ENCODE measurements at regions of chr19 and their contacts with region 1.

Region 1: GRCh38 chr19:39125554-39126311 is at the start of gene PAK4:
- DNase-seq: peak; percentile 97
- H3K4me3 ChIP-seq: peak within 1 kb of the TSS; percentile 71 to 97 (median 85)
- H3K27ac ChIP-seq: peak within 1 kb of the TSS; percentile 39
- H3K4me1 ChIP-seq: peaks cover 18% of the 10 kb centered on the region
- H3K27me3 ChIP-seq: no peaks in the 10 kb centered on the region
- CTCF ChIP-seq: no peak
- POLR2A ChIP-seq: peak; percentile 71
- total RNA-seq, gene PAK4: 49.6 and 55.4 TPM in 2 replicates

Region 2: DNA sequence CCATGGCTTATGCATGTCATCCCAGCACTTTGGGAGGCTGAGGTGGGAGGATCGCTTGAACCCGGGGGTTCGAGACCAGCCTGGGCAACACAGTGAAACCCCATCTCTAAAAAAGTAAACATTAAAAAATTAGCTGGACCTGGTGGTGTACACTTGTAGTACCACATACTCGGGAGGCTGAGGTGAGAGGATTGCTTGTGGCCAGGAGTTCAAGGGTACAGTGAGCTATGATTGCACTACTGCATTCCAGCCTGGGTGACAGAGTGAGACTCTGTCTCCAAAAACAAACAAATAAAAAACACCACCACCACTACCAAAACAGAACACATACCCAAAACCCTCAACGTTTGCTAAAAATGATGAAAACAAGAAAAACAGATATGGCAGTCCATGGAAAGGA is 166.1 kb before region 1 on chr19:
- CTCF ChIA-PET with region 1: interaction called, 10 read pairs
- POLR2A ChIA-PET with region 1: no interaction called
- dilution Hi-C with region 1: no loop called
- intact Hi-C with region 1: no loop called
- DNase-seq: no peak
- H3K4me3 ChIP-seq: no peak overlapping the region
- H3K27ac ChIP-seq: no peak overlapping the region
- H3K4me1 ChIP-seq: peaks cover 2% of the 10 kb centered on the region
- H3K27me3 ChIP-seq: no peaks in the 10 kb centered on the region
- CTCF ChIP-seq: no peak
- POLR2A ChIP-seq: no peak

Region 3: DNA sequence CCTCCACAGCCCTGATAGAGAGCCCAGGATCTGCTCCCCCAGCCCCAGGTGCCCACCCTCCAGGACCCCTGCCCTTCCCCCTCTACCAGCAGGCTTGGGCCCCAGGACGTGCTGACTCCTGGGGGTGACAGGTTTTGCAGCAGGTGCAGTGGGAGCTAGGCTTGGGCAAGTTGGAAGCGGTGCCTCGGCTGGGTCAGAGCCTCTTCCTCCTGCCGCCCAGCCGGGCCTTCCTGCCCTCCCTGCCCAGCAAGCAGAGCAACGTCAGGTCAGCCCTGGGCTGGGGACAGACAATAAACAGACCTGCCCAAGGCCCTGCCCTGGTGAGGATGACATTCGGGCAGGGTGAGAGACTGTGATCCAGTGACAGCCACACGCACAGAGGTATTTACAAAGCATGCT is 61.8 kb after region 1 on chr19:
- CTCF ChIA-PET with region 1: interaction called, 13 read pairs
- POLR2A ChIA-PET with region 1: no interaction called
- dilution Hi-C with region 1: no loop called
- intact Hi-C with region 1: loop called (anchors 1 kb)
- DNase-seq: no peak
- H3K4me3 ChIP-seq: no peak overlapping the region
- H3K27ac ChIP-seq: no peak overlapping the region
- H3K4me1 ChIP-seq: peaks cover 5% of the 10 kb centered on the region
- H3K27me3 ChIP-seq: peaks cover 4 to 7% of the 10 kb centered on the region in 2 experiments
- CTCF ChIP-seq: no peak
- POLR2A ChIP-seq: no peak

Region 4: GRCh38 chr19:39328046-39328705 is 202.4 kb after region 1 on chr19:
- CTCF ChIA-PET with region 1: interaction called, 124 read pairs
- POLR2A ChIA-PET with region 1: no interaction called
- dilution Hi-C with region 1: no loop called
- intact Hi-C with region 1: loop called (anchors 1 kb)
- DNase-seq: peak; percentile 62
- H3K4me3 ChIP-seq: no peak overlapping the region
- H3K27ac ChIP-seq: no peak overlapping the region
- H3K4me1 ChIP-seq: no peaks in the 10 kb centered on the region
- H3K27me3 ChIP-seq: no peaks in the 10 kb centered on the region
- CTCF ChIP-seq: peak; percentile 95 to 97
- POLR2A ChIP-seq: no peak

Region 5: DNA sequence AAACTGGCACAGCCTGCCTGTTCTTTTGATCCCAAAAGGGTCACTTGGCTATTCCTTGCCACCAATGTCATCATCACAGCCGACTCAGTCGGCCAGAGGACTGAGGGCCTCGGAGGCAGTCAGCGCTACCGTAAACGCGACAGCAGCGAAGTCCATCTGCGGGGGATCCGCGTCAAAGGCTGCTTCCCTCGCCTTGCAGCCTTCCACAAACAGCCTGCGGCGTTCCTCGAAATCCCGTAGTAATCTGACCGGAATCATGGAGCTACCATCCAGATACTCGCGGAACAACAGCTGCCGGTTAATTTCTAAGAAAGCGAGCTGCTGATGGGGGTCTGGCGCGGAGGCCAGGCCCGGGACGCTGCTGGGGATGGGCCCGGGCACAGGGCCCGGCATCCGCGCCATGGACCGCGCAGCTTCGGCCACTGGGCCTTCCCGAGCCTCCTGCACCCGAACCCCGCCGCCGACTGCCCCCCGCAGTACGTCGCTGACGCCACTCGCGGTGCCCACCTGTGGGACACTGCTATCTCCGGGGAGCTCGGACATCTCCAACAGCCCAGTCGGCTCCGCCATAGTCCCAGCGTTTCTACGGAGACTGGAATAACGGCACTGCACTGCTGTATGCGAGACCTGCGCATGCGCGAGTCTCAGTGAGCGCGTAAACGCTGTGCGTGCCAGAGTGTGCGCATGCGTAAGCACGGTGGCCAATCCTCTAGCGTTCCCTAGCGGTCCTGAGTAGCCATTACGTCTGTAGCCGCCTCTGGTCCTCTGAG is 406.7 kb after region 1 on chr19 and contains the start of gene EID2B:
- CTCF ChIA-PET with region 1: no interaction called
- POLR2A ChIA-PET with region 1: no interaction called
- dilution Hi-C with region 1: no loop called
- intact Hi-C with region 1: loop called (anchors 10 kb)
- DNase-seq: peak; percentile 97
- H3K4me3 ChIP-seq: peak within 1 kb of the TSS; percentile 68 to 93 (median 87)
- H3K27ac ChIP-seq: peak within 1 kb of the TSS; percentile 29
- H3K4me1 ChIP-seq: peaks cover 6% of the 10 kb centered on the region
- H3K27me3 ChIP-seq: no peaks in the 10 kb centered on the region
- CTCF ChIP-seq: peak; percentile 96
- POLR2A ChIP-seq: peak; percentile 90
- total RNA-seq, gene EID2B: 3.0 and 3.9 TPM in 2 replicates